AG04450 (cell line): ENCODE measurements at regions of chr18 and their contacts with region 1.

Region 1: DNA sequence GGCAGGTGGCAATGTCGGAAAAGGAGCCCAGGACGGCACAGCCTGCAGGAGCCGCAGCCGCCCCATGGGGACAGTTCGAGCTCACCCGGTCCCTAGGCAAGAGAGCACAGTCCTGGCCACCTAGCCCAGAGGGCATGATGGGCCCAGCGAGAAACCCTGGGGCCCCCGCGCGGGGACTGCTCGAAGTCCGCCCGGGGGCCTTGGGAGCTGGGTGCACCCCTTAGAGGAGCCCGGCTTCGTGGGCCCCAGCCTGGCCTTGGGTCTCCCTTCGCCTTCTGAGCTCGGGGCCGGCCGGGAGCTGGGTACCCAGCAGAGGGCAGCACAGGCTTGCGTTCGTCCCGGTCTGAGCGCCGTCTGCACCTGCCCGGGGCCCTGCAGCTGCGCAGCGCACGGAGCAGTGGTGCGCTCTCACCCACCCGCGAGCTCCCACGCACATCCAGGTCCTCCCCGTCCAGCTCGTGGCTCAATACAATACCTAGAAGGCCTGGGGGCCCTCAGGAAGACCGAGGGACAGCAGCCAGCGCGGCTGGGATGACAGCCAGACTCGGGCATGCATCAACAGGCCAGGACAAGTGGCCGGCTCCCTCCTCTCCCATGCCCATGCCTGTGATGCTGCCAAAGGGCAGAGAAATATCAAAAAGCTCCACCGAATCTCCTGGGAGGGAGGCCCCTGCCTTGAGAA is 96.2 kb upstream of the ZNF532 start:
- DNase-seq: no peak
- H3K4me3 ChIP-seq: peak overlapping the region; percentile 41
- H3K27ac ChIP-seq: no peak overlapping the region
- H3K27me3 ChIP-seq: peaks cover 15% of the 10 kb centered on the region
- CTCF ChIP-seq: peak; percentile 83

Region 2: GRCh38 chr18:58493516-58494253 is 274.7 kb before region 1 on chr18:
- CTCF ChIA-PET with region 1: interaction called, 30 read pairs
- POLR2A ChIA-PET with region 1: no interaction called
- DNase-seq: peak; percentile 66
- H3K4me3 ChIP-seq: no peak overlapping the region
- H3K27ac ChIP-seq: peak overlapping the region; percentile 63
- H3K27me3 ChIP-seq: no peaks in the 10 kb centered on the region
- CTCF ChIP-seq: peak; percentile 91

Region 3: DNA sequence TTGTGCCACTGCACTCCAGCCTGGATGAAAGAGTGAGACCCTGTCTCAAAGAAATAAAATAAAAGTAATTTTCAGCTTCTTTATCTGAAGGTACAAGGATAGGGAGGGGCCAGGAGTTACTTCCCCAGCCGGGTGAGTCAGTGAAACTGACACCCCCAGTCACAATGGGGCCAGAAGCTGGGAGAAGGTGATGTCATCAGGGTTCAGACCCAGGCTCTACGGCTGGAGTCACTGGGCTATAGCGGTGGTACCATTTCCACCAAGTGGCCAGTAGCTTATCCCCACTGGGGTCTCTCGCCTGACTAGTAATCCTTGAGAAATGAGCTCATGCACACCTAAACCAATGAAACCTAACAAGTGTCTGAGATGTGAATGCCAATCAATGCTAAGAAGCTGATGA is 247.5 kb before region 1 on chr18:
- CTCF ChIA-PET with region 1: interaction called, 22 read pairs
- POLR2A ChIA-PET with region 1: no interaction called
- DNase-seq: no peak
- H3K4me3 ChIP-seq: no peak overlapping the region
- H3K27ac ChIP-seq: no peak overlapping the region
- H3K27me3 ChIP-seq: no peaks in the 10 kb centered on the region
- CTCF ChIP-seq: no peak

Region 4: GRCh38 chr18:58535340-58536201 is 232.9 kb before region 1 on chr18:
- CTCF ChIA-PET with region 1: interaction called, 116 read pairs
- POLR2A ChIA-PET with region 1: no interaction called
- DNase-seq: no peak
- H3K4me3 ChIP-seq: no peak overlapping the region
- H3K27ac ChIP-seq: no peak overlapping the region
- H3K27me3 ChIP-seq: no peaks in the 10 kb centered on the region
- CTCF ChIP-seq: no peak

Region 5: DNA sequence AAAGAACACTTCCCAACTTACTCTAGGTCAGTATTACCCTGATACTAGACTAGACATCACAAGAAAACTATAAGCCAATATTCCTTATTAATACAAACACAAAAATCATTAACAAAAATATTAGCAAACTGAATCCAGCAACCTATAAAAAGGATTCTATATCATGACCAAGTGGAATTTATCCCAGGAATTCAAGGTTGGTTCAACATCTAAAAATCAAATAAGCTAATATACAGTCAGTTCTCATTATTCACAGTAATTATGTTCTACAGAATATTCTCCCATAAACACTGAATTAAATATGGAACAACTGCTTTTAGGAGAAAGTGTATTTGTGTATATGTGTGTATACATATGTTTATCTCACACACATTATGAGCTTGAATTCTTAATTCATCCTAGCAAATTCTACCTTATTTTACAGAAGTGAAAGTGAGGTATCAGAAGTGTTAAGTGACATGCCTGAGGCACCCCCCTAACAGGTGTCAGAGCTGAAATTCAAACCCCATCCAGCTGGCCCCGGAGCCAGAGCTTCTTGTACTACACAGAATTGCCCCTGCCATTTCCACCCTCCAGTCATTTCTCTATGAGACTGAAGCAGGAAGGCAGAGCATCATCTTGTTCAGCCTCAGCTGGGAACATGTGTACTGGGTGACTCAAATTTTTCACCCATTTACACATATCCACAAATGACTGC is 19.4 kb before region 1 on chr18:
- CTCF ChIA-PET with region 1: interaction called, 34 read pairs
- POLR2A ChIA-PET with region 1: no interaction called
- DNase-seq: no peak
- H3K4me3 ChIP-seq: no peak overlapping the region
- H3K27ac ChIP-seq: no peak overlapping the region
- H3K27me3 ChIP-seq: no peaks in the 10 kb centered on the region
- CTCF ChIP-seq: no peak

Region 6: GRCh38 chr18:58781627-58782194 is 13.3 kb after region 1 on chr18:
- CTCF ChIA-PET with region 1: interaction called, 21 read pairs
- POLR2A ChIA-PET with region 1: no interaction called
- DNase-seq: no peak
- H3K4me3 ChIP-seq: no peak overlapping the region
- H3K27ac ChIP-seq: no peak overlapping the region
- H3K27me3 ChIP-seq: no peaks in the 10 kb centered on the region
- CTCF ChIP-seq: peak; percentile 86

Region 7: DNA sequence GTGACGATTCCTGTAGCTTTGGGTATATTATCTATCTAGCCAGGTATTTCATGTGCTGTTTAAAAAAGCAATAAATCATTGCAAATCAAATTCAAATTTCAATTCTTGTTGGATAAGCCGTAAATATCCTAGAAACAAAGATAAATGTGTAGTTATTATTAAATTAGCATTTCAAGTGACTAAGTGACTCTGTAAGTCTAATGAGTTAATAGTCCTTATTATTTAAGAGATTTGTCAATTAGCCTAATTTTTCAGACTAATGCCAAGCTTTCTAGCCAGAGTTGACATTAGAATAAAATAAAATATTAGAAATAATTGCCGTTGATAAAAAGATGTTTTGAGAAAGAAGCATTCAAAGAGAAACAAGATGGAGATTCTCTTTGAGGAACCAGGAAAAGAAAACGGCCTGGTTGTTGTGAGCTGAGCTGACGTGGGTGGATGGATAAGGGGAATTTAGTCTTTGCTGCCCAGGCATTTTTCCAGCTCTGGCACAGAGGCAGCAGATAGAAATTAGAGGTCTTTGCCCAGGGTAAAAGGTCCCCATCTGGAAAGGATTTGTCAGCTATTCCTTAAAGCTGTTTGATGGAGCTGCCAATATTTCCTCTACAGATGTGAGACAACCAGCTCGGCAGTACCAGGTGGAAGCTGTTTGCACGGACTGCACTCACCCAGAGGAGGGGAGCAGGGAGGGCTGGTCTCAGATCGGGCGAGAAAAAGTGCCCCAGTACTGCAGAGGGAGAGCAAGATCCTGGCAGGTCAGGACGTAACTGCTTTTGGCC is 253.9 kb after region 1 on chr18:
- CTCF ChIA-PET with region 1: no interaction called
- POLR2A ChIA-PET with region 1: no interaction called
- DNase-seq: no peak
- H3K4me3 ChIP-seq: no peak overlapping the region
- H3K27ac ChIP-seq: no peak overlapping the region
- H3K27me3 ChIP-seq: no peaks in the 10 kb centered on the region
- CTCF ChIP-seq: no peak

Region 8: DNA sequence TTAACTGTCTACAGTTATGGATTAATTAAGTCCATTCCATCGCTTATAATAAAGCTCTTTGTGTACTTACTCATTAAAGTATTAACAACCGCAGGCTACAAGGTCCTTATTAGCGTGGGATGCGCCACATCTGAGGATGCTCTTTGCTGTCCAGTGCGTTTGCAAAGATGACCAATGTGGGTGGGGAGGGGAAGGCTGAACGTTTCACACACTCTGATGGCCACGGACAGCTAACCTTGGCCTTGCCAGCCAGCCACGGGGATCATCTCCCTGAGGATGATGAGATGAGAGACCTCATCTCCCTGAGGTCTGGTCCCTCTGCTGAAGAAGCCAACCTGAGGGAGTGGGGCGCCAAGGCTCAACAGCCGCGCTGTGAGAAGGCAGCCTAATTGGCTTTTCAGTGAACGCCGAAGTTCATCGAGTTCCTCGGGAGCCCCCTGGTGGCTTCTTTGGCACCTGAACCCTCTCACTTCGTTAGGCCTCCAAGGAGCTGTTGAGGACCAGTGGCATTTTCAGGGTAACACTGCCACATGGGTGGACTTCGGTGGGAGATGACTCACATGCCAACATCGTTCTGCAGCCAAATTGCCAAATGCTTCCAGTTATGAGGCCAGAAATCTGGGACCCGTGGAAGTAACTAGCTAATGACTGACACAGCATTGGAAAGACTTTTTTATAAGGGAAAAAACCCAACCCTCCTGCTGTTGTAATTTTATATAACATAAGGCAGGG is 301.9 kb after region 1 on chr18:
- CTCF ChIA-PET with region 1: interaction called, 269 read pairs
- POLR2A ChIA-PET with region 1: interaction called, 6 read pairs
- DNase-seq: peak; percentile 21
- H3K4me3 ChIP-seq: no peak overlapping the region
- H3K27ac ChIP-seq: no peak overlapping the region
- H3K27me3 ChIP-seq: peaks cover 15% of the 10 kb centered on the region
- CTCF ChIP-seq: peak; percentile 87